ENCODE measurements at regions of chr12 and their contacts with region 1.

Region 1: DNA sequence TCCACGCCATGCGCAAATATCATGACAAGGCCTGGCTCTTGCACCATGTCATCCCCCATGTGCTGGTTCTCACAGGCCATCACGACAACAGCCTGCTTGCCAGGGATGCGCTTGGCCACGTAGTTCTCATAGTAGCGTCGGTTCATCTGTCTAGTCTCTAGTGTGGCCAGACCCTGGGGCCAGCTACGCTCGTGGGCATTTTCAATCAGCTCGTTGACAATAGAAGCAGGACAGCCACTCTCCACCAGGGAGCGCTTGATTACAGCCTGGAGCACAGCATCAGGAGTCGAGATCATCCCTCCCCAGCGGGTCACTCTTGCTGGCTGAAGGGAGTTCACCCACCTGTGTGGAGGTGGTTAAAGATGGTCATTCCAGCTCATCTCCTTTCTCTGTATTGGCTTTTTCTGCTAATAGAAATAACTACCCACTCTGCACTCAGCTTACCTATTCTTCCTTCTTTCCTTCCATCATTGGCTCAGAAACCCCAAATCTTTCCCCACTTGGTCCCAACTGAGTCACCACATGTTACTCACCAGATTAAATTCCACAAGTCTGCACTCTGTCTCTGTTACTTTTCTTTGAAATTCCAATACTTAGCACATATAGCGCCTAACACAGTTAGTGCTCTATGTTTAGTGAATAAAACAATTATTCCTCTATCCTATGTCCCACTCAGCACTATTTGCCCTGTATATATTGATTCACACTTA is 15.1 kb downstream of the RNF41 start:
- DNase-seq: peak; percentile 69
- ATAC-seq: peak; percentile 84
- H3K4me3 Mint-ChIP-seq: no peak overlapping the region
- H3K27ac Mint-ChIP-seq: no peak overlapping the region
- H3K4me1 Mint-ChIP-seq: peaks cover 4% of the 10 kb centered on the region
- H3K27me3 Mint-ChIP-seq: no peaks in the 10 kb centered on the region

Region 2: DNA sequence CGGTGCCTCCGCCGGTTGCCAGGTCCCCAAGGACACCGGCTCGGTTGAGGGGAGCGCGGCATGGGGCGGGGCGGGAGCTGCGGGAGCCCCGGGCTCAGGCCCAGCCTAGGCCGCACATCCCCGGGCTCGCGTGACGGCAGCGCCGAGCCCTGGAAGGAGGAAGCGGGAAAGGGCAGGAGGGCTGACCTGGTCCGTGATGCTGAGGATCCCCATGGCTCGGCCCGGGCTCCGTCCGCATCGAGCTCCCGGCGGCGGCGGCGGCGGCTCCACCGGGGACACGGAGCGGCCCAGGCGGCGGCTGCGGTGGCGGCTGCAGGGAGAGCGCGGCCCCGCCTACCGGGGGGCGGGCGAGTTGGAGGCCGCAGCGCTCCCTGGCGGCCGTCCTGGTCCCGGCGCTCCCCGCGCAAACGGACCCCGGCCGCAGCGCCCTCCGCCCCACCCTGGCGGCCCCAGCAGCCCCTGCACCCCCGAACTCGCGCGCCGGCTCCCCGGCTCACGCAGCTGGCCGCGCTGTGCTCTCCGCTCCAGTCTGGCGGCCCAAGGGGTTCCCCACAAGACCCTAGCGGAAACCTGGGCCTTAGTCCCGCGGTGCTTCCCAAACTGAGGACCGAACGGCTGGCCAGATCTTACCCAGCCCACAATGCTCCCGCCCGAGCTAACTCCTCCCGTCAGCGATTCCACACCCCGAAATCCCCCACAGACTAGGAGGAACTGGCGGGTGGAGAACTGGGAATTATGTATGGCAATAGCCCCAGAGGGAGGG is 51.6 kb after region 1 on chr12 and contains the start of gene ANKRD52:
- CTCF ChIA-PET with region 1: interaction called, 16 read pairs
- POLR2A ChIA-PET with region 1: no interaction called
- intact Hi-C with region 1: no loop called
- DNase-seq: peak; percentile 90
- ATAC-seq: peak; percentile 92
- H3K4me3 Mint-ChIP-seq: peak within 1 kb of the TSS; percentile 83
- H3K27ac Mint-ChIP-seq: peak within 1 kb of the TSS; percentile 72
- H3K4me1 Mint-ChIP-seq: peaks cover 16% of the 10 kb centered on the region
- H3K27me3 Mint-ChIP-seq: no peaks in the 10 kb centered on the region
- total RNA-seq, gene ANKRD52: 29.2 to 31.0 TPM

Region 3: GRCh38 chr12:56461235-56462159 is 254.9 kb after region 1 on chr12:
- CTCF ChIA-PET with region 1: interaction called, 16 read pairs
- POLR2A ChIA-PET with region 1: no interaction called
- intact Hi-C with region 1: loop called in 1 of 2 experiments (anchors 5 kb)
- DNase-seq: no peak
- ATAC-seq: no peak
- H3K4me3 Mint-ChIP-seq: no peak overlapping the region
- H3K27ac Mint-ChIP-seq: no peak overlapping the region
- H3K4me1 Mint-ChIP-seq: peaks cover 5% of the 10 kb centered on the region
- H3K27me3 Mint-ChIP-seq: no peaks in the 10 kb centered on the region